Endothelial cell of umbilical vein (primary cell): ENCODE measurements at regions of chr17 and their contacts with region 1.

Region 1: GRCh38 chr17:44123356-44124117 is at the start of gene HDAC5:
- DNase-seq: peak; percentile 95
- H3K4me3 ChIP-seq: peak within 1 kb of the TSS; percentile 58 to 80 (median 78)
- H3K27ac ChIP-seq: peak within 1 kb of the TSS; percentile 51
- H3K4me1 ChIP-seq: peaks cover 7% of the 10 kb centered on the region
- H3K27me3 ChIP-seq: peaks cover 2 to 7% of the 10 kb centered on the region in 2 experiments
- CTCF ChIP-seq: peak; percentile 51 to 63
- POLR2A ChIP-seq: no peak
- total RNA-seq, gene HDAC5: 40.2 and 40.4 TPM in 2 replicates

Region 2: GRCh38 chr17:44086364-44087311 is 36.9 kb before region 1 on chr17:
- CTCF ChIA-PET with region 1: interaction called, 10 read pairs
- POLR2A ChIA-PET with region 1: interaction called, 4 read pairs
- dilution Hi-C with region 1: no loop called
- intact Hi-C with region 1: no loop called
- DNase-seq: peak; percentile 50
- H3K4me3 ChIP-seq: no peak overlapping the region
- H3K27ac ChIP-seq: no peak overlapping the region
- H3K4me1 ChIP-seq: peaks cover 6% of the 10 kb centered on the region
- H3K27me3 ChIP-seq: no peaks in the 10 kb centered on the region
- CTCF ChIP-seq: no peak
- POLR2A ChIP-seq: no peak

Region 3: DNA sequence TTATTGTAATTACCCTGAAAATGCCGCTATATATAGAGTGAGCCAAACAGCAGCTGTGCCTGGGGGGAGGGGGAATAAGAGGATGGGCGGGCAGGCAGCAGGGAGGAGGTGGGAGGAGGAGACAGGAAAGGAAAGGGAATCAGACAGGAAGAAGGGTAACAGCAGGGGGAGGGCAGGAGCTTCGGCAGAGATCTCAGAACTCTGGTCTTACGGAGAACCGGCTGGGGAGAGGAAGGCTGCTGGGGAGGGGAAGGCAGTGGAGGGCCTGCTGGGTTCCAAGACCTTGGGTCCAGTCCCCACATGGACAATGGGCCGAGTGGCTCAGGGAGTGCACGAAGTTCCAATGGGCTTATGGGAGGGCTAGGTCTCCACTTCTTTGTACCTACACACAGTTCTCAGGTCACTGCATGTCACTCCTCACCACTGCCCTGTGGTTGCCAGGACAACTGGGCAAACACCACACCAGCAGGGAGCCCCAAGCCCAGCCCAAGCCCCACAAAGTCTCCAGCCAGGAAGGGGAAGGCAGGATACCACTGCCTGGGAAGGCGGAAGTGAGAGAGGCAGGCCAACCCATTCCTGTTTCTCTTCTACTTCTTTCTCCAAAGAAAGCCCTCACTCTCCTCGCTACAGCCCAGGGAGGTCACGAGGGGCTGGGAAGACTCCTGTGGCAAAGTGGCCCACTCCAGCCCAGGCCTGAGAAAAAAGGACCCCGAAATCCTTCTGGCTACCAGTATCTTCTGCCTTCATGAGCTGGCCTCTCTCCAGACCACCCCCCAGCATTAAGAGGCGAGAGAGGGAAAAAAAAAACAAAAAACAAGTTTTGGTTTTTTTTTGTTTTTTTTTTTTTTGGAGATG is 27.7 kb before region 1 on chr17:
- CTCF ChIA-PET with region 1: interaction called, 13 read pairs
- POLR2A ChIA-PET with region 1: interaction called, 6 read pairs
- dilution Hi-C with region 1: no loop called
- intact Hi-C with region 1: loop called (anchors 1 kb)
- DNase-seq: peak; percentile 97
- H3K4me3 ChIP-seq: peak overlapping the region in 2 of 3 experiments; percentile 10 to 19
- H3K27ac ChIP-seq: peak overlapping the region; percentile 83
- H3K4me1 ChIP-seq: peaks cover 23% of the 10 kb centered on the region
- H3K27me3 ChIP-seq: no peaks in the 10 kb centered on the region
- CTCF ChIP-seq: no peak
- POLR2A ChIP-seq: peak; percentile 92

Region 4: GRCh38 chr17:44141717-44142285 is 18.3 kb after region 1 on chr17 and contains the start of gene HROB:
- CTCF ChIA-PET with region 1: interaction called, 14 read pairs
- POLR2A ChIA-PET with region 1: interaction called, 4 read pairs
- dilution Hi-C with region 1: no loop called
- intact Hi-C with region 1: loop called (anchors 1 kb)
- DNase-seq: peak; percentile 94
- H3K4me3 ChIP-seq: peak within 1 kb of the TSS; percentile 81 to 98 (median 88)
- H3K27ac ChIP-seq: peak within 1 kb of the TSS; percentile 93
- H3K4me1 ChIP-seq: peaks cover 20% of the 10 kb centered on the region
- H3K27me3 ChIP-seq: no peaks in the 10 kb centered on the region
- CTCF ChIP-seq: peak; percentile 87 to 97
- POLR2A ChIP-seq: no peak
- total RNA-seq, gene HROB: 9.0 and 10.1 TPM in 2 replicates

Region 5: GRCh38 chr17:44210342-44211192 is 87.0 kb after region 1 on chr17:
- CTCF ChIA-PET with region 1: no interaction called
- POLR2A ChIA-PET with region 1: no interaction called
- dilution Hi-C with region 1: no loop called
- intact Hi-C with region 1: no loop called
- DNase-seq: peak; percentile 89
- H3K4me3 ChIP-seq: no peak overlapping the region
- H3K27ac ChIP-seq: no peak overlapping the region
- H3K4me1 ChIP-seq: peaks cover 5% of the 10 kb centered on the region
- H3K27me3 ChIP-seq: no peaks in the 10 kb centered on the region
- CTCF ChIP-seq: peak; percentile 99
- POLR2A ChIP-seq: no peak